ENCODE measurements at regions of chr10 and their contacts with region 1.

Region 1: GRCh38 chr10:119207367-119207668 is at the start of gene GRK5:
- DNase-seq: peak; percentile 99
- H3K4me3 ChIP-seq: peak within 1 kb of the TSS; percentile 70
- H3K27ac ChIP-seq: peak within 1 kb of the TSS; percentile 95
- H3K4me1 ChIP-seq: peaks cover 49% of the 10 kb centered on the region
- H3K27me3 ChIP-seq: no peaks in the 10 kb centered on the region
- CTCF ChIP-seq: no peak
- total RNA-seq, gene GRK5: 54.7 and 58.2 TPM in 2 replicates

Region 2: DNA sequence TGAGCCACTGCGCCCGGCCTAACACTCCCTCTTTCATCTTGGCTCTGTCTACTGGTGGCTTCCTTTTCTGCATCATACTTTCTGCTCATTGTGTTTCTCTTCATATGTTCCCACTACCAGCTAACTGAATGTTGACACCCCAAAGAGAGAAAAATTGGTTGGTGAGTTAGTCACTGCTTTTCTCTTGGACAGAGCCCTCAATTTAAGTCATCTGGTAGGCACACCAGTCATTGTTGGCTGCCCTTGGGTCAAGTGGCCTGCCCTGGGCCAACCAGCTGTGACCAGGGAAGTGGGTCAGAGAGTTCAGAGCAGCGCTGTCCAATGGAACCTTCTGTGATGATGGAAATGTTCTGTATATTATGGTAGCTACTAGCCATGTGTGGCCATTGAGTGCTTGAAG is 52.0 kb after region 1 on chr10:
- CTCF ChIA-PET with region 1: interaction called, 13 read pairs
- POLR2A ChIA-PET with region 1: no interaction called
- intact Hi-C with region 1: no loop called
- DNase-seq: no peak
- H3K4me3 ChIP-seq: no peak overlapping the region
- H3K27ac ChIP-seq: no peak overlapping the region
- H3K4me1 ChIP-seq: peaks cover 15% of the 10 kb centered on the region
- H3K27me3 ChIP-seq: no peaks in the 10 kb centered on the region
- CTCF ChIP-seq: no peak

Region 3: GRCh38 chr10:119416855-119417254 is 209.5 kb after region 1 on chr10:
- CTCF ChIA-PET with region 1: interaction called, 17 read pairs
- POLR2A ChIA-PET with region 1: interaction called, 3 read pairs
- intact Hi-C with region 1: loop called (anchors 2 kb)
- DNase-seq: peak; percentile 66
- H3K4me3 ChIP-seq: no peak overlapping the region
- H3K27ac ChIP-seq: no peak overlapping the region
- H3K4me1 ChIP-seq: peaks cover 12% of the 10 kb centered on the region
- H3K27me3 ChIP-seq: no peaks in the 10 kb centered on the region
- CTCF ChIP-seq: peak; percentile 81

Region 4: DNA sequence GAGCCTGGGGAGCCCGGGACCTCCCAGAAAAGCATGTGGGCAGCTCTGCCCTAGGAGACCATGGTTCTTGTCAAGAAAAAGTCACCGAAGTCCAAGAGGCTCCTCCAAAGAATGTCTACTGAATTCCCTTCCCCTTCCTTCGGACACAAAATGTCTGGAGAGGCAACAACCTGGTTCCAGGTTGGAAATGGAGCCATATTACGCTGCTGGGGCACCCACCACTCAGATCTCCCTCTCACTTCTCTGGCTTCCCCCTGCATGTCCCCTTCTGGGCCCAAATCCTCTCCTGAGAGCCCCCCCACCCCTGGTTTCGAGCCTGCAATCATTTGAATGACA is 282.6 kb after region 1 on chr10:
- CTCF ChIA-PET with region 1: interaction called, 13 read pairs
- POLR2A ChIA-PET with region 1: no interaction called
- intact Hi-C with region 1: no loop called
- DNase-seq: no peak
- H3K4me3 ChIP-seq: no peak overlapping the region
- H3K27ac ChIP-seq: no peak overlapping the region
- H3K4me1 ChIP-seq: peaks cover 6% of the 10 kb centered on the region
- H3K27me3 ChIP-seq: no peaks in the 10 kb centered on the region
- CTCF ChIP-seq: peak; percentile 16; the same call in 1 of the 2 replicates

Region 5: GRCh38 chr10:119596537-119597404 is 389.5 kb after region 1 on chr10 and contains the start of gene TIAL1:
- CTCF ChIA-PET with region 1: no interaction called
- POLR2A ChIA-PET with region 1: no interaction called
- intact Hi-C with region 1: loop called (anchors 10 kb)
- DNase-seq: peak; percentile 100
- H3K4me3 ChIP-seq: peak within 1 kb of the TSS; percentile 80
- H3K27ac ChIP-seq: peak within 1 kb of the TSS; percentile 98
- H3K4me1 ChIP-seq: peaks cover 40% of the 10 kb centered on the region
- H3K27me3 ChIP-seq: no peaks in the 10 kb centered on the region
- CTCF ChIP-seq: no peak
- total RNA-seq, gene TIAL1: 176 and 199 TPM in 2 replicates